PC-9 (cell line): ENCODE measurements at regions of chr3 and their contacts with region 1.

Region 1: DNA sequence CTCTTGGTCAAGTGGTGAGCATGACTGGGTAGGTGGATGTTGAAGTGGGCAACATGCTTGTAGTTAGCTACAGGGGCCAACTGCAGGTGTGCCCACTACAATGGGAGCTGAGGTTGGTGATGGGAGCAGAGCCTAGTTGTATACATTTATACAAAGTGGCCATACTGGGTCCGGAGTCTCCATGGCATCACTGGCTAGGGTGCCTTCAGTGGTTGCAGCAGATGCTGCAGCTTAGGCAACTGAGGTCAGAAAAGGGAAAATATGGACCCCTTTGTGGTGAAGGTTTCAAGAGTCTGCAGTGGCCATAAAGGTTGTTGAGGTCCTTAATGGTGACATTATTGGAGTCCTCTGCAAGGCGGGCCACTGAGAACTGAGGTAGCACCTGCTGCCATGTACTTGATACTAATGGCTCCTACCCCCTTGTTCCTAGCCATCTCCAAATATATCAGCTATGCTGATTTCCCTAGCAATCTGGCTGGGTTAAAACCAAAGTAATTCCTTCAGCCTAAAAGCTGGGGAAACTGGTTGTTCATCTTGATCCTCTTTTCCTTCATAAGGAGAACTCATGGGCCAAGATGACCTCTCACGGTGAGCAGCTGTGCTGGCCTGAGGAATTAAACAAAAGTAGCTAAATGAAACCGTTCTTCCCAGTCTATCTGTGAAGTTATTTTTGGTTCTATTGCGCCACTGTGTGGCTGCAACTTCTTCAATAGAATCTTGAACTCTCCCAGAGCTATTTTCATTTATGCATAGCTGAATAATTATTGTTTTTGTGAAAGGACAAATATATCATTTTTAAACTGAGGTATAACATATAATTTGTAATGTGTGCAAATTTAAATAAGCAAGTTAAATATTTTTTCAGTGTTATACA is 76.0 kb upstream of the PLSCR4 start:
- DNase-seq: no peak
- H3K4me3 ChIP-seq: no peak overlapping the region
- H3K27ac ChIP-seq: no peak overlapping the region
- H3K4me1 ChIP-seq: no peaks in the 10 kb centered on the region
- H3K27me3 ChIP-seq: no peaks in the 10 kb centered on the region
- CTCF ChIP-seq: 0 out of 2 replicates have a peak, but pooled peaks have one; percentile 43

Region 2: GRCh38 chr3:146065573-146066006 is 261.3 kb before region 1 on chr3:
- CTCF ChIA-PET with region 1: interaction called, 8 read pairs
- POLR2A ChIA-PET with region 1: no interaction called
- intact Hi-C with region 1: loop called (anchors 5 kb)
- DNase-seq: peak; percentile 15 to 37
- H3K4me3 ChIP-seq: no peak overlapping the region
- H3K27ac ChIP-seq: no peak overlapping the region
- H3K4me1 ChIP-seq: 0 out of 2 replicates have a peak, but pooled peaks cover 9% of the 10 kb centered on the region
- H3K27me3 ChIP-seq: no peaks in the 10 kb centered on the region
- CTCF ChIP-seq: peak; percentile 91

Region 3: DNA sequence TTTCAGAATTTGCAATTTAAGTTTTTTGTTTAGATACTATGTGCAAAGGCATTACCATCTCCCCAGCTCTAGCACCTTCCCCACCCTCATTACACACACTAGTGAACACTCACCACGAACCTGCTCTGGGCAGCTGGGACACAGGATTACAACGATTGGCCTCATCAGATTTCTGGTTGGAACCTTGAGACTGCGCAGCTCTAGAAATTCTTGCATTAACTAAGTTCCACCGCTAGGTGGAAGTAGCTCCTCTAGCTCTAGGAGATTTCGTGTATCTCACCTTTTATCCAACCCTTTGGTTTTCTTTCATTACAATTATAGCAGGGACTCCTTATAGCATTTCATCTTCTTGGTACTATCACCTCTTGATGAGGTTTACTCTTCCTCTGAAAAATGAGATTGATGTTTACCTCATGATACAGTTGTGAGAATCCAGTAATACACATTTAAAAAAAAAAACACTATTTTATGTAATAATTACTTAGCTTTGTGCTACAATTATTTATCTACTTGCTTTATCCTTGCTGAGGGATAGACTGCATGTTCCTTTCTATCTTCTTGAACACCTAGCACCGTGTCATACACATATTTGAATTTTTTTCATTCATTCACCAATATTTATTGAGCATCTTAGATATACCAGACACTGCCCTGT is 137.3 kb before region 1 on chr3:
- CTCF ChIA-PET with region 1: interaction called, 15 read pairs
- POLR2A ChIA-PET with region 1: interaction called, 3 read pairs
- intact Hi-C with region 1: loop called (anchors 1 kb)
- DNase-seq: peak; percentile 16 to 45
- H3K4me3 ChIP-seq: no peak overlapping the region
- H3K27ac ChIP-seq: no peak overlapping the region
- H3K4me1 ChIP-seq: no peaks in the 10 kb centered on the region
- H3K27me3 ChIP-seq: no peaks in the 10 kb centered on the region
- CTCF ChIP-seq: peak; percentile 82

Region 4: GRCh38 chr3:146218880-146219866 is 107.7 kb before region 1 on chr3:
- CTCF ChIA-PET with region 1: no interaction called
- POLR2A ChIA-PET with region 1: no interaction called
- intact Hi-C with region 1: loop called (anchors 2 kb)
- DNase-seq: peak in 1 of 2 experiments; percentile 18
- H3K4me3 ChIP-seq: no peak overlapping the region
- H3K27ac ChIP-seq: no peak overlapping the region
- H3K4me1 ChIP-seq: 0 out of 2 replicates have a peak, but pooled peaks cover 6% of the 10 kb centered on the region
- H3K27me3 ChIP-seq: no peaks in the 10 kb centered on the region
- CTCF ChIP-seq: peak; percentile 85